ENCODE measurements at regions of chrX and their contacts with region 1.

Region 1: GRCh38 chrX:24498975-24499374 is 33.9 kb downstream of the PDK3 start:
- H3K4me3 ChIP-seq: no peak overlapping the region
- H3K27ac ChIP-seq: no peak overlapping the region
- H3K4me1 ChIP-seq: peaks cover 7% of the 10 kb centered on the region
- CTCF ChIP-seq: no peak

Region 2: DNA sequence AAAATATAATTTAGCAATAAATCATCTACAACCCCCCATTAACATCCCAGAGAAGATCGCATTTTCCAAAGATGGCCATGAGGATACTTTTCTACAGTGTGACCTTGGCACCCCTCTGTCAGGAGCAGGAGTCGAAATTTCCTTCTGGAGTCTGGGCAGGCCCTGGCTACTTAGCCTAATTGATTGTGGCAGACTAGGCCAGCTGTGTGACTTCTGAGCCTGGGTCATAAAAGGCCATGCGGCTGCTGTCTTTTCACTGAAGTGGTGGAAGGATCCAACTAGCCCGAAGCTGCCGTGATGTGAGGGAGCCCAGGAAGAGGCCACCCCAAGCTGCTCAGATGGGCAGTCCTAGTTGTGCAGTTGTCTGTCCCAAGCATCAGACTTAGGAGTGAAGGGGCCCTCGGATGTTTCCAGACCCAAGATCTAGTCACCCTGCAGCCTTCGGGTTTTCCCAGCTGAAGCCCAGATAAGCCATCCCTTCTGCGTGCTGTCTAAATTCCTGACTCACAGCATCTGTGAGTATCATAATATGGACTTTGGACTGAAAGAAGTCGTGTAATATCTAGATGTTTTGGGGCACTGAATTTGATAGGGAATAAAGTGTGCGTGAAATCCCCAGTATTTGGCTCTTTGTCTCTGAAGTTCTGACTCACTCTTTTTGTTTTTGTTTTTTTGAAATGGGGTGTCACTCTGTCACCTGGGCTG is 12.8 kb before region 1 on chrX:
- CTCF ChIA-PET with region 1: interaction called, 29 read pairs
- POLR2A ChIA-PET with region 1: no interaction called
- H3K4me3 ChIP-seq: no peak overlapping the region
- H3K27ac ChIP-seq: no peak overlapping the region
- H3K4me1 ChIP-seq: peaks cover 3% of the 10 kb centered on the region; the same call in 1 of the 2 replicates
- CTCF ChIP-seq: no peak

Region 3: DNA sequence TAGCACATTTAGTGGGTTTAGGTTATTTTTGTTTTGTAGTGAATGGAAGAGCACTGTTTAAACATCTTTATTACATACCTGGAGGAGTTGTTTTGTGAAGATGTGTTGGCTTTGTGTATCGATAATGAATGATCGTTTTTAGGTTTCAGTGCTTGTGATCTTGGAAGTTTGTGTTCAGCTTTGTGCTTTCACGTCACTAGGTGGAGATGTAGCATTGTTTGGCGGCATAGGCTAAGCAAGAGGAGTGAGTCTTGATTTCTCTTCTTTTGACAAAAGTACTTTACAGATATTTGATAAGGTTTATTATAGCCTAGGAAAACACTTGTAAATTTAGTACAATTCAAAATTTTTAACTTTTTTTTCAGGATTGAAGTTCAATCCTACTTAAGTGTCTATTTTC is 16.5 kb after region 1 on chrX:
- CTCF ChIA-PET with region 1: interaction called, 10 read pairs
- POLR2A ChIA-PET with region 1: no interaction called
- H3K4me3 ChIP-seq: no peak overlapping the region
- H3K27ac ChIP-seq: no peak overlapping the region
- H3K4me1 ChIP-seq: no peaks in the 10 kb centered on the region
- CTCF ChIP-seq: 0 out of 2 replicates have a peak, but pooled peaks have one; percentile 12

Region 4: DNA sequence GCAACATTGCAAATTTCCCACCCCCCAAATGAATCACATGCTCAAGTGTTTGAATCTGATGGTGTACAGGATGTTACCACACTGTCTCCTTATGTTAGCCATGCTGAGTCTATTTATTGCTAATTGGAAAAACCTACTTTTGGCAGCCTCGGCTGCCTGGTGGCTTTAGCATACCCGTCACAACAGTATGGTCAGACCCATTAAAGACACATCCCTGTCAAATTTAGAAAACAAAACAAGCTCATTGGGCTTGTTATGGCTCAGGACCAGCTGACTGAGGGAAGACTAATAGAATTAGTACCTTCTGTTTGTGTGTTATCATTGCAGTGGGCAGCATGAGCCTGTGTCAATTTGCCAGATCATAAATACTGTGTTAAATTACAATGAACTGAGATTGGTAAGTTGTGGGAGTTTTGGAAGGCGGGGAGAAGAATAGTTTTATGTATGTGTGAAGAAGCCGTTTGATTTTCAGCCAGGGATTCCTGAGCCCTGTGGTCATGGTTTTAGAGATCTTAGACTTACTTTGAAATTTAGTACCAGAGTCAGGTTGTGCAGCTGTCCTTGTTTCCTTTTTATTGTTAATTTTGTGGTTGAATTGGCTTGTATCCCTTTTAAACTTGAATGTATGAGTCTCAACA is 261.5 kb after region 1 on chrX:
- CTCF ChIA-PET with region 1: no interaction called
- POLR2A ChIA-PET with region 1: no interaction called
- H3K4me3 ChIP-seq: no peak overlapping the region
- H3K27ac ChIP-seq: no peak overlapping the region
- H3K4me1 ChIP-seq: no peaks in the 10 kb centered on the region
- CTCF ChIP-seq: no peak

Measured in HEK293 (cell line).